Heart right ventricle (tissue), 16 donors: ENCODE measurements at regions of chr19 and their contacts with region 1.

Region 1: DNA sequence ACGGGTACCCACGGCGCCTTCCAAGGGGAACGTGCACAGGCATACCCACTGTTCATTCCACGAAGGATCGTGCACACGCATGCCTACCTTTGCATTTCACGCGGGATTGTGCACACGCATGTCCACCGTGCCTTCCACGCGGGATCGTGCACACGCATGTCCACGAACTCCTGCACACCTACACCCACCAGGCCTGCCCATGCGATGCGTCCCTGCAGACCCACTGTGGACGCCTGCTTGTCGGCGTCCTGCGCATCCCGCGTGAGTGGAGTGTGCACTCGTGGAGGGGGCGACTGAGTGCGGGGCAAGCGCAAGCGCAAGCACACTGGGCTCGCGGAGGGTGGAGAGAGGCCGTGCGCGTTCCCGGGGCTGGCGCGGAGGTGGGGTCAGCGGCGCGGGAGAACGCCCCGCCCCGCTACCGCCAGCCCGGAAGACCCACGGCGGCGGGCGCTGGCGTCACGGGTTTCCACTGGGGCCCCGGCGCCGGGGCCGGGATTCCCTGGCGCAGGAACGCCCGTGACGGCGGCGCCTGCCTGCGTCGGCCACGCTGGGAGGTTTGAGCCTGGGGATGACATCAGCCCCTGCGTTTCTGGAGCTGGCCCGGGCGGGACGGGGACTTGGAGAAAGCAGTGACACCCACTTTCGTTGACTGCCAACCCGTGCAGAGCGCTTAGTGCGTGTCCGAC is 18.7 kb downstream of the GADD45B start:
- DNase-seq: peak; percentile 83 to 86
- ATAC-seq: peak; percentile 75 to 86 (median 82)
- H3K4me3 ChIP-seq: peak overlapping the region; percentile 16 to 72 (median 64)
- H3K27ac ChIP-seq: peak overlapping the region; percentile 83 to 97 (median 92)
- H3K4me1 ChIP-seq: peaks cover 11 to 46% (median 24%) of the 10 kb centered on the region in 9 donors
- H3K27me3 ChIP-seq: peaks cover 0 to 33% (median 0%) of the 10 kb centered on the region in 7 donors
- CTCF ChIP-seq: no peak

Region 2: DNA sequence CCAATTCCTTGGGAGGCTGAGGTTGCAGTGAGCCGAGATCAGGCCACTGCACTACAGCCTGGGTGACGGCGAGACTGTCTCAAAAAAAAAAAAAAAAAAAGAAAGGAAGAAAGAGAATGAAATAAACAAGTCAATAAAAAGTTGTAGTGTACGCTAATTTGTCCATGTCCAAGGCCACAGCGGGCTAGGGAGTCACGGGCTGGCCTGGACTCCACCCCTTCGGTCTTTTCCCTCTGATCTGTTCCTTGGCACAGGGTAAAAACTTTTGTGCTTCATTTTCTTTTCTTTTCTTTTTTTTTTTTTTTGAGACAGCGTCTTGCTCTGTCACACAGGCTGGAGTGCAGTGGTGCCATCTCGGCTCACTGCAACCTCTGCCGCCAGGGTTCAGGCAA is 424.2 kb before region 1 on chr19:
- intact Hi-C with region 1: no loop called
- DNase-seq: no peak
- ATAC-seq: no peak
- H3K4me3 ChIP-seq: no peak overlapping the region
- H3K27ac ChIP-seq: peak overlapping the region in 1 of 10 donors; percentile 11
- H3K4me1 ChIP-seq: peaks cover 0 to 28% (median 8%) of the 10 kb centered on the region in 9 donors
- H3K27me3 ChIP-seq: no peaks in the 10 kb centered on the region
- CTCF ChIP-seq: no peak

Region 3: GRCh38 chr19:2475702-2476450 is 18.7 kb before region 1 on chr19 and contains the start of gene GADD45B:
- intact Hi-C with region 1: loop called in 1 of 10 experiments (anchors 2 kb)
- DNase-seq: peak; percentile 97 to 98
- ATAC-seq: peak; percentile 77 to 90 (median 86)
- H3K4me3 ChIP-seq: peak within 1 kb of the TSS; percentile 73 to 99 (median 87)
- H3K27ac ChIP-seq: peak within 1 kb of the TSS; percentile 75 to 98 (median 93)
- H3K4me1 ChIP-seq: peaks cover 9 to 50% (median 37%) of the 10 kb centered on the region in 9 donors
- H3K27me3 ChIP-seq: no peaks in the 10 kb centered on the region
- CTCF ChIP-seq: no peak
- total RNA-seq, gene GADD45B: 19.6 to 297 (median 31.3) TPM

Region 4: DNA sequence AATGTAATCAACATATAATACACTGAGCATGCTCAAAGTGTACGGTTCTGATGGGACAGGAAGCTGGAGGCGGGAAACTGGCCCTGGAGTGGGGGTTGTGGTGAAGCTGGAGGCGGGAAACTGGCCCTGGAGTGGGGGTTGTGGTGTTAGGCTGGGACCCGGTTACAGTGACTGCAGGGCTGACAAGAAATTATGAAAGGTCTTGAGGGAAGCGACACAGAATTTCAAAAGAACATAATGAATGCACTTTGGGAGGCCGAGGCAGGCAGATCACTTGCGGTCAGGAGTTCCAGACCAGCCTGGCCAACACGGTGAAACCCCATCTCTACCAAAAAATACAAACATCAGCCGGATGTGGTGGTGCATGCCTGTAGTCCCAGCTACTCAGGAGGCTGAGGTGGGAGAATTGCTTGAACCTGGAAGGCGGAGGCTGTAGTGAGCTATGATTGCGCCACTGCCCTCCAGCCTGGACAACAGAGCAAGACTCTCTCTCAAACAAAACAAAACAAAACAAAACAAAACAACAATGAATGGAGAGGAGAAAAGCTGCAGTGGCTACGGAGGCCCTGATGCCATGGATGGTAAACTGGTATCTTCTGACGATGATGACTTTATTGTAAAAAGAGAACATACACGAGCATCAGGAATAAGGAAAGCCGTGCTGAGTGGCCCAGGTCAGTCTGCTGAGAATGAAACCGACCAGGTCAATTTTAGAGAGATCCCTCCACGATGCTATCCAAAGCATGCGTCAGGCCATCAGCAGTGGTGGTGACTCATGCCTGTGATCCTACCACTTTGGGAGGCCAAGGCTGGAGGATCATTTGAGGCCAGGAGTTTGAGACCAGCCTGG is 43.2 kb after region 1 on chr19:
- intact Hi-C with region 1: loop called in 9 of 10 experiments (anchors 2 to 10 kb)
- DNase-seq: no peak
- ATAC-seq: no peak
- H3K4me3 ChIP-seq: no peak overlapping the region
- H3K27ac ChIP-seq: no peak overlapping the region
- H3K4me1 ChIP-seq: peaks cover 13 to 40% (median 29%) of the 10 kb centered on the region in 9 donors
- H3K27me3 ChIP-seq: no peaks in the 10 kb centered on the region
- CTCF ChIP-seq: no peak

Region 5: GRCh38 chr19:2543463-2544442 is 49.2 kb after region 1 on chr19:
- intact Hi-C with region 1: loop called in 9 of 10 experiments (anchors 2 to 10 kb)
- DNase-seq: peak; percentile 92 to 93
- ATAC-seq: peak; percentile 75 to 88 (median 82)
- H3K4me3 ChIP-seq: peak overlapping the region in 8 of 10 donors; percentile 8 to 40 (median 30)
- H3K27ac ChIP-seq: peak overlapping the region; percentile 83 to 97 (median 93)
- H3K4me1 ChIP-seq: peaks cover 35 to 80% (median 74%) of the 10 kb centered on the region in 9 donors
- H3K27me3 ChIP-seq: no peaks in the 10 kb centered on the region
- CTCF ChIP-seq: peak in 5 of 9 donors; percentile 9 to 63 (median 60)